ENCODE measurements at regions of chr1 and their contacts with region 1.

Region 1: DNA sequence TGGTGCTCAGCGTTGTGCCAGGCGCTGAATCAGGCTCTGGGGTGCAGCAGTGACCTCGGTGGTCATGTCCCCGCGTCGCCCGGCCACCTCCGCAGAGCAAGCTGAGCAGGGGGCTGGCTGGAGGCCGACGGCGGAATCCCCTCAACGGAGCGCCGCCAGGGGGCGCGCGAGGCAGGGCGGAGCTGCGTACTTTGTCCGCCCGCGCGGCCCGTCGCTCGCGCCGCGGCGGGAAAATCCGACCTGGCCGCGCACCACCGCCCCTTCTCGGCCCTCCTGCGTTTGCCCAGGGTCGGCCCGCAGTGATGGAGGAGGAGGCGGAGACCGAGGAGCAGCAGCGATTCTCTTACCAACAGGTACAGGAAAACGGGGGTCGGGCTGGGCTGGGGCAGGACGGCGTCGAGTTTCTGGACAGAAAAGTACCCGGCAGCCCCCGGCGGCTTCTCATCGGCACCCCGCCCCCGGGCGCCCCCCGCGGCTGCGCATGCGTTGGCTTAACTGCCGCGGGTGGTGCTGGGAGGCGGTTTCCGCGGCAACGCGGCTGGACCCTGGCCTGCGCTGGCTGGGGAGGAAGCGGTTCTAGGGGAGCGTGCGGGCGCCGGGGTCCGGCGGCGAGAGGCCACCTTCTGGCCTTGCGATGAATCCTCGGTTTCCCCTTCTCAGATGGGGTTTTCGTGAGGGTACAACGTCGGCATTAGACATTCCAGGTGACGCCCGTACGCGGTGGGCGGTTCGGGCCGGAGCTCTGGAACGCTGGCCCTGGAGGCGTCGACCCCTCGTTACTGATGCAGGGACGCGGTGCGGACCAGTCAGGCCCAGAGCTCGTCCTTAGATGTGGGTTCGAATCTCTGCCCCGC is at the start of gene CENPS:
- DNase-seq: peak; percentile 77 to 92 (median 87)
- H3K4me3 ChIP-seq: peak within 1 kb of the TSS; percentile 63 to 96
- H3K4me3 Mint-ChIP-seq: peak within 1 kb of the TSS; percentile 83 to 92 (median 91)
- H3K27ac ChIP-seq: peak within 1 kb of the TSS; percentile 83
- H3K27ac Mint-ChIP-seq: peak within 1 kb of the TSS; percentile 93 to 98 (median 95)
- H3K4me1 ChIP-seq: peaks cover 30% of the 10 kb centered on the region
- H3K4me1 Mint-ChIP-seq: peaks cover 13 to 37% (median 18%) of the 10 kb centered on the region in 4 donors
- H3K27me3 ChIP-seq: no peaks in the 10 kb centered on the region
- H3K27me3 Mint-ChIP-seq: no peaks in the 10 kb centered on the region
- total RNA-seq, gene CENPS: 7.2 to 7.9 TPM

Region 2: GRCh38 chr1:9784508-9785133 is 645.8 kb before region 1 on chr1:
- CTCF ChIA-PET with region 1: interaction called, 3 read pairs
- POLR2A ChIA-PET with region 1: no interaction called
- intact Hi-C with region 1: loop called (anchors 2 kb)
- DNase-seq: peak; percentile 70 to 75 (median 72)
- H3K4me3 ChIP-seq: no peak overlapping the region
- H3K4me3 Mint-ChIP-seq: peak overlapping the region in 2 of 8 donors; percentile 29 to 61
- H3K27ac ChIP-seq: no peak overlapping the region
- H3K27ac Mint-ChIP-seq: peak overlapping the region in 5 of 7 donors; percentile 18 to 64 (median 42)
- H3K4me1 ChIP-seq: peaks cover 38% of the 10 kb centered on the region
- H3K4me1 Mint-ChIP-seq: peaks cover 22 to 42% (median 27%) of the 10 kb centered on the region in 4 donors
- H3K27me3 ChIP-seq: no peaks in the 10 kb centered on the region
- H3K27me3 Mint-ChIP-seq: no peaks in the 10 kb centered on the region

Region 3: GRCh38 chr1:9942939-9943788 is 487.3 kb before region 1 on chr1 and contains the starts of genes LZIC and NMNAT1:
- CTCF ChIA-PET with region 1: no interaction called
- POLR2A ChIA-PET with region 1: interaction called, 3 read pairs
- intact Hi-C with region 1: loop called (anchors 2 kb)
- DNase-seq: peak; percentile 84 to 90 (median 85)
- H3K4me3 ChIP-seq: peak within 1 kb of the TSS; percentile 91 to 100
- H3K4me3 Mint-ChIP-seq: peak within 1 kb of the TSS; percentile 94 to 97 (median 97)
- H3K27ac ChIP-seq: peak within 1 kb of the TSS; percentile 92
- H3K27ac Mint-ChIP-seq: peak within 1 kb of the TSS; percentile 89 to 99 (median 98)
- H3K4me1 ChIP-seq: peaks cover 18% of the 10 kb centered on the region
- H3K4me1 Mint-ChIP-seq: peaks cover 11 to 35% (median 21%) of the 10 kb centered on the region in 4 donors
- H3K27me3 ChIP-seq: no peaks in the 10 kb centered on the region
- H3K27me3 Mint-ChIP-seq: no peaks in the 10 kb centered on the region
- total RNA-seq, gene LZIC: 34.0 to 34.8 TPM
- total RNA-seq, gene NMNAT1: 6.1 to 6.7 TPM

Region 4: GRCh38 chr1:10195570-10195969 is 234.9 kb before region 1 on chr1:
- CTCF ChIA-PET with region 1: no interaction called
- POLR2A ChIA-PET with region 1: no interaction called
- intact Hi-C with region 1: no loop called
- DNase-seq: no peak
- H3K4me3 ChIP-seq: no peak overlapping the region
- H3K4me3 Mint-ChIP-seq: no peak overlapping the region
- H3K27ac ChIP-seq: no peak overlapping the region
- H3K27ac Mint-ChIP-seq: peak overlapping the region in 1 of 7 donors; percentile 8
- H3K4me1 ChIP-seq: no peaks in the 10 kb centered on the region
- H3K4me1 Mint-ChIP-seq: no peaks in the 10 kb centered on the region
- H3K27me3 ChIP-seq: no peaks in the 10 kb centered on the region
- H3K27me3 Mint-ChIP-seq: peaks cover 0 to 3% of the 10 kb centered on the region in 2 donors

Region 5: GRCh38 chr1:10209905-10210810 is 220.3 kb before region 1 on chr1 and contains the start of gene KIF1B:
- CTCF ChIA-PET with region 1: interaction called, 39 read pairs
- POLR2A ChIA-PET with region 1: interaction called, 17 read pairs
- intact Hi-C with region 1: loop called (anchors 1 kb)
- DNase-seq: peak; percentile 95 to 98 (median 95)
- H3K4me3 ChIP-seq: peak within 1 kb of the TSS; percentile 64 to 93
- H3K4me3 Mint-ChIP-seq: peak within 1 kb of the TSS; percentile 88 to 95 (median 90)
- H3K27ac ChIP-seq: peak within 1 kb of the TSS; percentile 64
- H3K27ac Mint-ChIP-seq: peak within 1 kb of the TSS; percentile 77 to 90 (median 84)
- H3K4me1 ChIP-seq: peaks cover 17% of the 10 kb centered on the region
- H3K4me1 Mint-ChIP-seq: peaks cover 11 to 35% (median 23%) of the 10 kb centered on the region in 4 donors
- H3K27me3 ChIP-seq: no peaks in the 10 kb centered on the region
- H3K27me3 Mint-ChIP-seq: peaks cover 0 to 3% of the 10 kb centered on the region in 2 donors
- total RNA-seq, gene KIF1B: 16.8 to 18.1 TPM

Region 6: DNA sequence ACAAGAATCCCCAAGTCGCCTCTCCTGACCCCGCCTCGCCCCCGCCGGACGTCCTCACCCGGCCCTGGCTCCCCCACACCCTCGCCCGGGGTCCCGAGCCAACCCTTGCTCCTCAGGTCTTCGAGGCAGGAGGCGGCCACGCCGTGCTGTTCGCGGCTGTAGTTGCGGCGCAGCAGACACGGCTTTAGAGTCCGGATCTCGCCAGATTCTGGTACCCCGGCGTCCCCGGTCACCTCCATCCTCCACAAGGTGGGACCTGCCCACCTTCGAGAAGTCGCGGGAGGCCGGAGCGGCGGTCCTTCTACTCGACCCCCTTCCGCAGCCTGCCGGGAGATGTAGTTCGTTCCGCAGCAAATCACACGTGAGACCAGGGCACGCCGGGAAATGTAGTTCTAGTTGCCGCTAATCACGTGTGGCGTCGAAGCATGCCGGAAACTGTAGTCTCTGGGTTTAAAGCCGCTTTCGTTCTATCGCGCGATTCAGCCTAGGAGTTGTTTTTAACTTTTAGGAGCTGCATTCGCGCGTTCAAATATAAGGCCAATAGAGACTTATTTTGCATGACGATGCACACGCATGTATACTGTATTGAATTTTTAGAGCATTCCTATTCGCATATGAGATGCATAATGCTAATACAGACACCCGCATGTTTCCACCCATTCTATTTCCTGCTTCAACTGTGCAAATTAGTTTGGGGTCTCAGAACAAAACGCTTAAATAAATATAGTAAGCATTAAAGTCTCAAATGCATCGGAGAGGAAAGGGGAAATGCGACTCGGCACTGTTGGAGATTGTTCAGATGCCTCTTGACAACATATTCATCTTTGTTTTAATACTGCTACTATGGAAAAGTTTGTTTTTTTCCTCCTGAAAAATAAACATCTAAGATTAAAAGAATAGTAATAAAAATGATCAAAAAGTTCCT is 42.0 kb after region 1 on chr1 and contains the start of gene DFFA:
- CTCF ChIA-PET with region 1: interaction called, 3 read pairs
- POLR2A ChIA-PET with region 1: interaction called, 5 read pairs
- intact Hi-C with region 1: loop called (anchors 1 kb)
- DNase-seq: peak; percentile 86 to 96 (median 88)
- H3K4me3 ChIP-seq: peak within 1 kb of the TSS; percentile 64 to 84
- H3K4me3 Mint-ChIP-seq: peak within 1 kb of the TSS; percentile 91 to 95 (median 92)
- H3K27ac ChIP-seq: peak within 1 kb of the TSS; percentile 68
- H3K27ac Mint-ChIP-seq: peak within 1 kb of the TSS; percentile 83 to 94 (median 89)
- H3K4me1 ChIP-seq: peaks cover 50% of the 10 kb centered on the region
- H3K4me1 Mint-ChIP-seq: peaks cover 32 to 53% (median 43%) of the 10 kb centered on the region in 4 donors
- H3K27me3 ChIP-seq: no peaks in the 10 kb centered on the region
- H3K27me3 Mint-ChIP-seq: no peaks in the 10 kb centered on the region
- total RNA-seq, gene DFFA: 22.4 to 25.3 TPM

Region 7: DNA sequence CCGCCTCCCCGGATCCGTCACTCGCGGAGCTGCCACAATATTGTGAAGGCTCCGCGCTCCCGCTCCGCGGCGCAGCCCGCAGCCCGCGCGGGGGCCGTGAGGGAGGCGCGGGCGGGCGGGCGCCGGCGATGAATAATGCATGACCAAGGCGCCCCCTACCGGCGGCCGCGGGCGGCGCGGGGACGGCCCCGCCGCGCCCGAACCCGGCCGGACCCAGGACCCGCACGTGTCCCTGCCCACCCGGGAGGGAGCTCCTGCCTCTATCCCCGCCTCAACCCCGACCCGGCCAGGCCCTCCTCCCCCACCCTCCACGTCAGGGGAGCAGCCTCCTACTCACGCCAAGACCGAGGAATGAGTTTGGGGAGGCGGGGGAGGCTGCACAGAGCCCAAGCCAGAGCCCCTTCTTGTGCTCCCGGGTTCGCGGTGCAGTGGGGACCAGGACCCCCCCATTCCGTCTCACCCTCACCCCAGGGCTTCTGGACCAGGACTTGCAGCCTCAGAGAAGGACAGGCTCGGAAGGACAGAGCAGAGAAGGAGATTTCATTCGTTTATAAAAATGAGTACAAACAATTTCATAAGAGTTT is 436.8 kb after region 1 on chr1:
- CTCF ChIA-PET with region 1: no interaction called
- POLR2A ChIA-PET with region 1: no interaction called
- intact Hi-C with region 1: loop called (anchors 2 kb)
- DNase-seq: peak; percentile 58 to 67 (median 61)
- H3K4me3 ChIP-seq: peak overlapping the region in 1 of 2 donors; percentile 34
- H3K4me3 Mint-ChIP-seq: peak overlapping the region in 4 of 8 donors; percentile 32 to 80 (median 67)
- H3K27ac ChIP-seq: no peak overlapping the region
- H3K27ac Mint-ChIP-seq: peak overlapping the region in 1 of 7 donors; percentile 29
- H3K4me1 ChIP-seq: peaks cover 13% of the 10 kb centered on the region
- H3K4me1 Mint-ChIP-seq: peaks cover 4 to 18% (median 12%) of the 10 kb centered on the region in 4 donors
- H3K27me3 ChIP-seq: peaks cover 25% of the 10 kb centered on the region
- H3K27me3 Mint-ChIP-seq: peaks cover 26 to 55% of the 10 kb centered on the region in 2 donors